ENCODE measurements at regions of chr4 and their contacts with region 1.

Region 1: GRCh38 chr4:88591787-88592599 is at the start of gene HERC3:
- DNase-seq: peak; percentile 88
- H3K4me3 ChIP-seq: peak within 1 kb of the TSS; percentile 80
- H3K27ac ChIP-seq: no peak within 1 kb of the TSS
- H3K4me1 ChIP-seq: peaks cover 14% of the 10 kb centered on the region
- CTCF ChIP-seq: no peak
- total RNA-seq, gene HERC3: 9.2 and 14.4 TPM in 2 replicates

Region 2: GRCh38 chr4:89110986-89111832 is 519.2 kb after region 1 on chr4 and contains the start of gene TIGD2:
- CTCF ChIA-PET with region 1: no interaction called
- POLR2A ChIA-PET with region 1: no interaction called
- intact Hi-C with region 1: loop called (anchors 5 kb)
- DNase-seq: peak; percentile 85
- H3K4me3 ChIP-seq: peak within 1 kb of the TSS; percentile 72
- H3K27ac ChIP-seq: no peak within 1 kb of the TSS
- H3K4me1 ChIP-seq: peaks cover 9% of the 10 kb centered on the region
- CTCF ChIP-seq: peak; percentile 64
- total RNA-seq, gene TIGD2: 3.7 and 6.3 TPM in 2 replicates